T-cell (primary cell): ENCODE measurements at regions of chr10 and their contacts with region 1.

Region 1: DNA sequence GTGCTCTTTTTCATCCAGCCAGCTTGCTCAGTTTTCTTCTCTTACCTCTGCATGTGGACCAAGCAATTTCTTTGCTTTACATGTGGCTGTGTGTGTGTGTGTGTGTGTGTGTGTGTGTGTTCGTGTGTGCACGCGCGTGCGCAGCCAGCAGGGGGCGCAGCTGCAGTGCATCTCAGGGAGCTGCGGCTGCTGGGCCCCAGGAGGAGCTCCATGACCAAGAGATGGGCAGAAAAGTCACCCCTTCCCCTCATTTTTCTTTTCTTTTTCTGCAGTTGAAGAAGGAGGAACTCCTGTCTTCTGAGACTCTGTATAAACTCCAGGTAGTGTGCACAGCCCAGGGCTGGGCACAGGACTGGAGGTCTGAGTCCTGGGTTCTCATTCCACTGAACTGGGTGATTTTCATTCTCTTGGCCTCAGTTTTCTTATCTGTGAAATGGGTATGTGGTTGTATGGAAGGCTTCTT is 41.8 kb downstream of the BLNK start:
- DNase-seq: peak; percentile 46 to 82 (median 66)
- ATAC-seq: peak; percentile 63 to 74 (median 68)
- H3K4me3 ChIP-seq: no peak overlapping the region
- H3K4me3 Mint-ChIP-seq: no peak overlapping the region
- H3K27ac ChIP-seq: no peak overlapping the region
- H3K27ac Mint-ChIP-seq: peak overlapping the region; percentile 2 to 71
- H3K4me1 ChIP-seq: no peaks in the 10 kb centered on the region
- H3K4me1 Mint-ChIP-seq: peaks cover 0 to 7% (median 2%) of the 10 kb centered on the region in 3 donors
- H3K27me3 ChIP-seq: peaks cover 0 to 3% of the 10 kb centered on the region in 2 experiments
- H3K27me3 Mint-ChIP-seq: no peaks in the 10 kb centered on the region

Region 2: GRCh38 chr10:95414844-95415485 is 814.6 kb before region 1 on chr10:
- CTCF ChIA-PET with region 1: no interaction called
- POLR2A ChIA-PET with region 1: no interaction called
- DNase-seq: no peak
- ATAC-seq: no peak
- H3K4me3 ChIP-seq: no peak overlapping the region
- H3K4me3 Mint-ChIP-seq: no peak overlapping the region
- H3K27ac ChIP-seq: no peak overlapping the region
- H3K27ac Mint-ChIP-seq: no peak overlapping the region
- H3K4me1 ChIP-seq: no peaks in the 10 kb centered on the region
- H3K4me1 Mint-ChIP-seq: no peaks in the 10 kb centered on the region
- H3K27me3 ChIP-seq: no peaks in the 10 kb centered on the region
- H3K27me3 Mint-ChIP-seq: no peaks in the 10 kb centered on the region

Region 3: DNA sequence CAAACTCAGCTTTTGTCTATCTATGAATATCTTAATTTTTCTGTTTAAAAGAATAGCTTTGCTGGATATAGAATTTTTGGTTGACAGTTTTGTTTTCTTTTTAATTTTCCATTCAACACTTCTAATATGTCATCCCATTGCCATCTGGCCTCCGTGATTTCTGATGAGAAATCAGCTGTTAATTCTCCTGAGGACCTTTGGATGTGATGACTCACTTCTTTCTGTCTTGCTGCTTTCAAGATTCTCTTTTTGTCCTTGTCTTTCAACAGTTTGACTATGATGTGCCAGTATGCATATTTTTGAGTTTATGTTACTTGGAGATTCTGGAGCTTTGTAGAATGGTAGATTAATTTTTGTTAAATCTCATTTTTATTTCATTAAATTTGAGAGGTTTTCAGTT is 61.1 kb before region 1 on chr10:
- CTCF ChIA-PET with region 1: interaction called in 1 of 2 experiments, 11 read pairs
- POLR2A ChIA-PET with region 1: no interaction called
- DNase-seq: no peak
- ATAC-seq: no peak
- H3K4me3 ChIP-seq: no peak overlapping the region
- H3K4me3 Mint-ChIP-seq: no peak overlapping the region
- H3K27ac ChIP-seq: no peak overlapping the region
- H3K27ac Mint-ChIP-seq: no peak overlapping the region
- H3K4me1 ChIP-seq: no peaks in the 10 kb centered on the region
- H3K4me1 Mint-ChIP-seq: no peaks in the 10 kb centered on the region
- H3K27me3 ChIP-seq: no peaks in the 10 kb centered on the region
- H3K27me3 Mint-ChIP-seq: no peaks in the 10 kb centered on the region

Region 4: DNA sequence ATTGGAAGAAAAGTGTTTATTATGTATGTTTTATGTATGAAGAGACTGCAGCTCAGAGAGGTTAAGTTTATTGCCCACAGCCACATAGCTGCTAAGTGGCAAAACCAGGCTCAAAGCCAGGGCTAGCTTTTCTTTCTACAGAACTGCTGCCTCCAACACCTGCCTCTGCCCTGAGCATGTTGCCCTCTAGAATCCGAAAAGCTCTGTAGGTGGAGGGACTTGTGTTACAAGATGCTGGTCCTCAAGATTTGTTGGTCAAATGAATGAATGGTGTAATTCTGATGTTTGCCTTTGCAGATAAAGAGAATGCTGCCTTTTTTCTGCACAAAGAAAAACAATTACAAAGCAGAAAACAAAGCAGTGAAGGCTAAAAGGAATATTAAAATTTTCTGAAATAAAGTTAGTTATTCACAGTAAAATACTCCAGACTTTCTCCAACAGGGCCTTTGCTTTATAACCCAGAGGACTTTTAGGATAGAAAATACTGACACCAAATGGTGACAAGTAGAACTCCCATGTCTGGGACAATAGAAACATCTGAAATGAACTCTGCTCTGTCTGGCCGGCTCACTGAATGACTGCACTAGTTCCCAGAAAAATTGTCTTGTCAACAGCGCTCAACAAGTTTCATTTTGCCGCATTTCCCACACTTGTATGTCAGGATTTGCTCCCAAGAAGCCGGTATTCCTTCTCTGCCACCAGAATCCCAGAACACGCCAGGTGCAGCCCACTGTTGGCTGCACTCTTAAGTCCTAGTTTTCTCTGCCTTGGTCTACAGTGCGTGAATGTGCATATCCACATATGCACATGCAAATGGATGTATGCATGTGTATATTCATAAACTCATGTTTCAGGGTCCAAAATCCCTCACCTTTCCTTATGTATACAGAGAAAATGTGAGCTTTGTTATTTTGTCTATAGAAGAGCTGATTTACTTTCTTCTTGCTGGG is 63.6 kb after region 1 on chr10:
- CTCF ChIA-PET with region 1: interaction called, 21 to 34 read pairs
- POLR2A ChIA-PET with region 1: no interaction called
- DNase-seq: peak in 4 of 35 experiments; percentile 4 to 44 (median 16)
- ATAC-seq: peak in 2 of 4 experiments; percentile 60 to 68
- H3K4me3 ChIP-seq: no peak overlapping the region
- H3K4me3 Mint-ChIP-seq: no peak overlapping the region
- H3K27ac ChIP-seq: no peak overlapping the region
- H3K27ac Mint-ChIP-seq: peak overlapping the region in 1 of 2 donors; percentile 30
- H3K4me1 ChIP-seq: peaks cover 2 to 8% of the 10 kb centered on the region in 2 experiments
- H3K4me1 Mint-ChIP-seq: peaks cover 23 to 35% (median 27%) of the 10 kb centered on the region in 3 donors
- H3K27me3 ChIP-seq: peaks cover 0 to 4% of the 10 kb centered on the region in 2 experiments
- H3K27me3 Mint-ChIP-seq: peaks cover 0 to 13% of the 10 kb centered on the region in 2 donors

Region 5: GRCh38 chr10:96339957-96340904 is 110.6 kb after region 1 on chr10:
- CTCF ChIA-PET with region 1: interaction called, 7 to 11 read pairs
- POLR2A ChIA-PET with region 1: interaction called in 1 of 2 experiments, 5 read pairs
- DNase-seq: peak in 33 of 35 experiments; percentile 8 to 75 (median 50)
- ATAC-seq: peak in 3 of 4 experiments; percentile 70 to 84 (median 75)
- H3K4me3 ChIP-seq: no peak overlapping the region
- H3K4me3 Mint-ChIP-seq: no peak overlapping the region
- H3K27ac ChIP-seq: no peak overlapping the region
- H3K27ac Mint-ChIP-seq: no peak overlapping the region
- H3K4me1 ChIP-seq: no peaks in the 10 kb centered on the region
- H3K4me1 Mint-ChIP-seq: peaks cover 0 to 3% (median 2%) of the 10 kb centered on the region in 3 donors
- H3K27me3 ChIP-seq: peaks cover 0 to 3% of the 10 kb centered on the region in 2 experiments
- H3K27me3 Mint-ChIP-seq: peaks cover 2 to 8% of the 10 kb centered on the region in 2 donors